B cell (primary cell): ENCODE measurements at regions of chr3 and their contacts with region 1.

Region 1: DNA sequence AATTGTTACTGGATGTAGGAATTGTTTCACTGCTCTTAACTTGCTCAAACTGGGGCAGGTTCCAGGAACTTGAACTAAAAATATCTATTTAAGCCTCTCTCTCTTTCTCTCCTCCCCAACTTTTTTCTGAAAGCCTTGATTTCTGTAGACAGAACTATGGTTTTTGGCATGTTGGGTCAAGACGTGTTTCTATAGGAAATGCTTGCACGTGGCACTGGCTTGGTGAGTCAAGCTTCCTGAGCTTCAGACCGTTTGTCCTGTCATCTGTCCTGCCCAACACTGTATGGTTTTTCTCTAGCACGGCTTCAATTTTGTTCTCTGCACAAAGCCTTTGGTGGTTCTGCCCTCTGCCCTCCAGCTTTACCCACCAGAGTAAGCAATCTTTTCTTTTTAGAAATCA is 13.5 kb downstream of the EAF1 start:
- DNase-seq: no peak
- ATAC-seq: no peak
- H3K4me3 ChIP-seq: no peak overlapping the region
- H3K4me3 Mint-ChIP-seq: no peak overlapping the region
- H3K27ac ChIP-seq: no peak overlapping the region
- H3K27ac Mint-ChIP-seq: no peak overlapping the region
- H3K4me1 ChIP-seq: no peaks in the 10 kb centered on the region
- H3K4me1 Mint-ChIP-seq: no peaks in the 10 kb centered on the region
- H3K27me3 ChIP-seq: no peaks in the 10 kb centered on the region
- H3K27me3 Mint-ChIP-seq: no peaks in the 10 kb centered on the region
- CTCF ChIP-seq: no peak

Region 2: DNA sequence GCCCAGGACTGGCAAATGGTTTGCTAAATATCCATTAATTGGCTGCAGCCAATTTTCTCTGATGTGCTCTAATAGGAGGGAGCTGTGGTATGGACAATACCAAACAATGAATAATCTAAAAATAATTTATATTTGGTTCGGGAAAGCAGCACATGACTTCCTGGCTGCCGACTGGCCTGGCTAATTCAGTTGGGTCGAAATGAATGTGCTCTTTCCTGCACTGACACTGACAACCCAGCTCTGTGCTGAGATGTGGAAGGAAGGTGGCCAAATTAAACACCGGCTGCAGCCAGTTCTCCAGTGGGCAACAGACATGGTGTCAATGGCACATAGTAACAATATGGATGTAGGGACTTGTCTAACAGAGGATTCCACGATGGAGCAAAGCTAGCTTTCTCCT is 101.7 kb after region 1 on chr3:
- CTCF ChIA-PET with region 1: no interaction called
- POLR2A ChIA-PET with region 1: no interaction called
- intact Hi-C with region 1: loop called (anchors 10 kb)
- DNase-seq: no peak
- ATAC-seq: no peak
- H3K4me3 ChIP-seq: no peak overlapping the region
- H3K4me3 Mint-ChIP-seq: no peak overlapping the region
- H3K27ac ChIP-seq: no peak overlapping the region
- H3K27ac Mint-ChIP-seq: no peak overlapping the region
- H3K4me1 ChIP-seq: no peaks in the 10 kb centered on the region
- H3K4me1 Mint-ChIP-seq: no peaks in the 10 kb centered on the region
- H3K27me3 ChIP-seq: no peaks in the 10 kb centered on the region
- H3K27me3 Mint-ChIP-seq: no peaks in the 10 kb centered on the region
- CTCF ChIP-seq: no peak

Region 3: DNA sequence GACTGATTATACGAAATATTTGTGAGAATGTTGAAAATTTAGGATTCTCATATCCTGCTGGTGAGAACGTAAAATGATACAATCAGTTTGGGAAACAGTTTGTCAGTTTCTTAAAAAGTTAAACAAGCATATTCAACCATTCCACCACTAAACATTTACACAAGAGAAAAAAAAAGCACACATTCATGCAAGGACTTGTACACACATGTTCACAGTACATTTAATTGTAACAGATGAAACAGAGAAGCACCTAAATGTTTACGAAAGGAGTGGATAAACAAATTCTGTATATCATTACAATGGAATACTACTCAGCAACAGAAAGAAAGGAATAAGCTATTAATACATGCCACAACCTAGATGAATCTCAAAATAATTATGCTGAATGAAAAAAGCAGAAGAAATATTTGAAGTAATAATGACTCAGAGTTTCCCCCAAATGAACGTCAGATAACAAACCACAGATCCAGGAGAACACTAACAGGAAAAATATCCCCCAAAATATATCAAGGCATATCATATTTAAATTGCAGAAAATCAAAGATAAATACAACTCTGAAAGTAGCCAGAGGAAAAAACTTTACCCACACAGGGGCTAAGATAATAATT is 342.6 kb after region 1 on chr3:
- CTCF ChIA-PET with region 1: no interaction called
- POLR2A ChIA-PET with region 1: no interaction called
- intact Hi-C with region 1: no loop called
- DNase-seq: no peak
- ATAC-seq: no peak
- H3K4me3 ChIP-seq: no peak overlapping the region
- H3K4me3 Mint-ChIP-seq: no peak overlapping the region
- H3K27ac ChIP-seq: no peak overlapping the region
- H3K27ac Mint-ChIP-seq: no peak overlapping the region
- H3K4me1 ChIP-seq: no peaks in the 10 kb centered on the region
- H3K4me1 Mint-ChIP-seq: peaks cover 5% of the 10 kb centered on the region
- H3K27me3 ChIP-seq: no peaks in the 10 kb centered on the region
- H3K27me3 Mint-ChIP-seq: no peaks in the 10 kb centered on the region
- CTCF ChIP-seq: no peak